ENCODE measurements at regions of chr11 and their contacts with region 1.

Region 1: GRCh38 chr11:126989942-126990715 is 10.4 kb downstream of the KIRREL3 start:
- DNase-seq: peak; percentile 79 to 94 (median 89)

Region 2: DNA sequence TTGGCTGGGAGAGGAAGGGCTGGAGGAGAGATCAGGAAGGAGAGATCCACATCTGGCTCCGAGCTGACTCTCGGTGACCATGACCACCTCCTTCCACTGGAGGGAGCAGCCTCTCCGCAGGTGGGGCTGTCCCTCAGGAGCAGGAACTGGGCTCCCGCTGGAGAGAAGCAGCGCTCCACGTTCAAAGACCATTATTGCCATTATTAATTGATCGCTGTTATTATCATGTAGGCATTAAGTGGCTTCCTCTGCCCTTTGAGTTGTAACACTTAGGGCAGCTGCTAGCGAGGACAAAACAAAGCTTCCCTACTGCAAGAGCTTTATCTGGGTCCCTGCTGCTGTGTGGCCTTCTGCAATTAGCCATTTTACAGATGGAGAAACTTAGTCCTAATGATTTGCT is 382.8 kb before region 1 on chr11:
- intact Hi-C with region 1: loop called (anchors 10 kb)
- DNase-seq: peak; percentile 45 to 91 (median 80)

Region 3: DNA sequence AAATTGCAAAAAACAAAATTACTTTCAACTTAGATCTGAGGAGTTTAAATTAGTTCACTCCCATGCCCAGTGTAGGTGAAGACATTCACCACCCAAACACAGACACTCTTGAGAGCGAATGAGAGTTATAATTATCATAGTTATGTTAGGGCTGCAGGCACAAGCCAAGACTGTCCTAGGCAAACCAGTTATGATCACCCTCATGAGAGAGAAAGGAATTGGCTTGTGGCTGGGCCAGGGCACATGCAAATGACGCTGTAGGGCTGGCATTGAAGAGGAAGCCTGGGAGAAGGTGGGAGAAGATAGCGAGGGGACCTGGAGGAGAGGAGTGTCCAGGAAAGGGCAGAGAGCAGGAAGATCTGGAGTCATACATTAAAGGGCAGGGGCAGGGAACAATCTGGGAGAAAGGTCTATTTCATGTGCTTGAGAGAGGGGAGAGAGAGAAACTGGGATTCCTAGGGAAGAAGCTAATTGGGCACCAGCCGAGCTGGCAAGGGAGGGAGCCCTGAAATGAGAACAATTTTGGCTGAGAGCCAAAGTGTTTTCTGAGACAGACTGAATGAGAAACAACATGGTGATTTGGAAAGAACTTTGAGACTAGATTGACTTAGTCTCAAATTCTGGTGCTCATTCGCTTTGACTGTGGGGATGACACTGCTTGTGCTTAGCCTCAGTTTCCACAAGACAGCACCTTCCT is 269.4 kb before region 1 on chr11:
- intact Hi-C with region 1: loop called (anchors 5 kb)
- DNase-seq: no peak

Region 4: DNA sequence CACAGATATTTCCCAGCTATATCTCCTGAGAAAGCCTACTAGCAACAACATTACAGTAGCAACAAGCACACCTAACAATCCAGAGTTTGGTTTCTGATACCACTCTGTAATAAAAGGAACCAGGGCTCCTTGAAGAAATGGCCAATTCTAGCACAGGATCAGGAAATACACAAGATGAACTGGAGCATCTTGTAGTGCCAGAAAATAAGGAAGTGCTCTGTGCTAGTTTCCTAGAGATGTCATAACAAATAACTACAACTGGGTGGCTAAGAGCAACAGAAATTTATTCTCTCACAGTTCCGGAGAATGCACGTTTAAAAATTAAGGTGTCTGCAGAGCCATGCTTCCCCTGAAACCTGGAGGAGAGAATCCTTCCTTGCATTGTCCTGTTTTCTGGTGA is 207.3 kb before region 1 on chr11:
- intact Hi-C with region 1: loop called (anchors 10 kb)
- DNase-seq: no peak

Region 5: DNA sequence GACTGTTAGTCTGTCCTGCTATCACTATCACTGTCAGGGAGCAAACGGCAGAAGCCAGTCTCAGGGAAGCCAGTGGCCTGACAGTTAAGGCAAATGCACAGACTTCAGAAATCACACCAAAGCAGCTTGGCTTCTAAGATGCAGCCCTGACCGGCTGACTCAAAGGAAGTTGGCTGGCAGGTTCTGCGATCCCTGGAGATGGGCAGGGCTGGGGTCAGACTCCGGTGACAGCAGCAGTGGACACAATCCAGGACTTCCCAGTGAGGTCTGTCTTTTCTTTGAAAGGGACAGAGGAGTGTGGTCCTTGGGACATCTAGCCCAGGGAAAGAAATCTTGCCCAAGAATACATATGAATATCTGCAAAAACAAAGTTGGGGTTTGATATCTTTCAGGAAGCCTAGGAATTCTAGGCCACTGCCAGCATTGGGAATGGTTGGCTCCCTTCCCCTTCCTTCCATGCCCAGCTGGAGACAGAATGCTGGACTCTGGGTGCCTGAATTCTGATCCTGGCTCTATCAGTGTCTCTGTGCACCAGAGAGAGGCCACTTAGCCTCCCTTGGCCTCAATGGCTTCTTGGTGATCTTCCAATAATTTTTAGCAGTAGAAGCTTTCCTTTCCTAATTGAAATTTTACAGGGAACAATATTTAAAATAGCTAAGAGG is 98.4 kb before region 1 on chr11:
- intact Hi-C with region 1: loop called (anchors 10 kb)
- DNase-seq: peak in 3 of 42 donors; percentile 13 to 22 (median 18)

Region 6: GRCh38 chr11:127042445-127042844 is 52.3 kb after region 1 on chr11:
- intact Hi-C with region 1: no loop called
- DNase-seq: no peak